Body of pancreas (tissue), 4 donors: ENCODE measurements at regions of chr6 and their contacts with region 1.

Region 1: GRCh38 chr6:106223300-106223930 is 102.1 kb downstream of the ATG5 start:
- DNase-seq: peak; percentile 46 to 67 (median 59)
- ATAC-seq: peak; percentile 58
- H3K4me3 ChIP-seq: no peak overlapping the region
- H3K27ac ChIP-seq: no peak overlapping the region
- H3K4me1 ChIP-seq: peaks cover 6% of the 10 kb centered on the region
- H3K27me3 ChIP-seq: no peaks in the 10 kb centered on the region
- CTCF ChIP-seq: peak in 5 of 7 experiments; percentile 39 to 70 (median 59)
- POLR2A ChIP-seq: no peak

Region 2: GRCh38 chr6:105733565-105734162 is 489.8 kb before region 1 on chr6:
- intact Hi-C with region 1: loop called (anchors 10 kb)
- DNase-seq: no peak
- ATAC-seq: no peak
- H3K4me3 ChIP-seq: no peak overlapping the region
- H3K27ac ChIP-seq: no peak overlapping the region
- H3K4me1 ChIP-seq: no peaks in the 10 kb centered on the region
- H3K27me3 ChIP-seq: no peaks in the 10 kb centered on the region
- CTCF ChIP-seq: peak; percentile 41 to 66 (median 58)
- POLR2A ChIP-seq: no peak

Region 3: DNA sequence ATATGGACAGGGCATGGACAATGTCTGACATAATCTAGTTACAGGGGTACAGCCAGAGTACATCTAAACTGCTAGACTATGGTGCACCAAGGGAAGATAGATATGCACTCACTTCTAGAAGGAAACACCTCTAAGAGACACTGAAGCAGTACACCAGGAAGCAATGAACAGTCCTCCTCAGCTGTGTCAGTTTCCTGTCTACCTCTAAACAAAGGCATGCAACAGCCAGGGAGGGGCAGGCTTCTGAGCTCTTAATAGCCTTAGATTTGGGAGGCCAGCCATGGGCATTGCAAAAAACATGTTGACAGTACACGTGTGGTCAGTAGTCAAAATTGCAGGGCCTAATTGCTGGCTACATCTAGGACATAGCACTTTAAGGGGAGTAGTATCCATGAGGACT is 158.5 kb after region 1 on chr6:
- intact Hi-C with region 1: no loop called
- DNase-seq: peak in 3 of 4 donors; percentile 23 to 33 (median 25)
- ATAC-seq: peak; percentile 56
- H3K4me3 ChIP-seq: no peak overlapping the region
- H3K27ac ChIP-seq: peak overlapping the region in 1 of 4 donors; percentile 38
- H3K4me1 ChIP-seq: no peaks in the 10 kb centered on the region
- H3K27me3 ChIP-seq: no peaks in the 10 kb centered on the region
- CTCF ChIP-seq: no peak
- POLR2A ChIP-seq: no peak